Left lung (tissue), 14 donors: ENCODE measurements at regions of chr13 and their contacts with region 1.

Region 1: DNA sequence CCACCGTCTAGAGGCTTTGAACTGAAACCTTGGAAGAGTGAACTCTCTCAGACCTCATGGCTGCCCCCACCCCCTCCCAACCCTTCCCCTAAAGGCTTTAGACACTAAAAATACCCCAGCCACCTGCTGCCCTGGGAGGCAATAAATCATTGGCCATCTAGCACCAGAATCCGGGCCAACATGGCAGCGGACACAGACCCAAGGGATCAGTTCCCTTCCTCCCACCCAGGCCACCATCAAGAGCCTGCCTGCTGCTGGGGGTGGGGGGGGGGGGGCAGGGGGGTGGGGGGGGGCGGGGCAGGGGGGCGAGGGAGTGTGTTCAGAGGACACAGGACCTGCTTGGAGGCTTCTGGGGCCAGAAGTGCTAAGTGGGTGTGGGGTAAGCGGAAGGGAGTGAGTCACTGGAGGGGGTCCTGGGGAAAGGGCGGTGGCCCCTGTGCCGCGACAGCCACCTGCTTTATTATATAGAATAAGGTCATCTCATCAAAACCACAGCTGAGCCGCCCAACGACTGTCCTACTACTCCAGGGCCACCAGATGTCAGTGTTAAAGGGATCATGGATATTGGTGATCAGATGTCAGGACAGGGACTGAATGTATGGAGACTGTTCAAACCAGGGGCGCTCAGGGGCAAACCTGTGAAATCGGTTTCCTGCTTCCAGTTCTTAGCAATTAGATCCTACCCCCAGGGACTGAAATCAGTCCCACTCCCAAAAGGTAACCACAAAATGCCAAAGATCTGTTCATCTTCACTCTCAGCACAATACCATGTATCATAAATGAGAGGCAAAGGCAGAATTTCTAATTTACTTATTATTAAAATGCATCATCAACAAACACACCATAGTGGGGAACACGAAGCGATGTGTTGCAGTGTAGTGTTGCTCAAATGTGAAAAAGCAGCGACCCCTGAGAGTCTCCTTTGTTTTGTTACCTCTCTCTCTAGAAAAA is 24.3 kb downstream of the ARL11 start:
- DNase-seq: peak in 1 of 4 donors; percentile 36
- ATAC-seq: peak; percentile 72
- H3K4me3 ChIP-seq: no peak overlapping the region
- H3K27ac ChIP-seq: no peak overlapping the region
- H3K4me1 ChIP-seq: no peaks in the 10 kb centered on the region
- H3K27me3 ChIP-seq: no peaks in the 10 kb centered on the region
- CTCF ChIP-seq: peak in 1 of 2 donors; percentile 11

Region 2: GRCh38 chr13:49840266-49840665 is 187.6 kb after region 1 on chr13:
- intact Hi-C with region 1: loop called in 1 of 2 experiments (anchors 10 kb)
- DNase-seq: peak in 1 of 4 donors; percentile 39
- ATAC-seq: peak; percentile 69
- H3K4me3 ChIP-seq: no peak overlapping the region
- H3K27ac ChIP-seq: no peak overlapping the region
- H3K4me1 ChIP-seq: no peaks in the 10 kb centered on the region
- H3K27me3 ChIP-seq: no peaks in the 10 kb centered on the region
- CTCF ChIP-seq: no peak